ENCODE measurements at regions of chr11 and their contacts with region 1.

Region 1: GRCh38 chr11:111601979-111602864 is at the start of gene SIK2:
- DNase-seq: peak; percentile 94
- ATAC-seq: peak; percentile 94
- H3K4me3 ChIP-seq: peak within 1 kb of the TSS; percentile 94
- H3K27ac ChIP-seq: peak within 1 kb of the TSS; percentile 97
- H3K4me1 ChIP-seq: peaks cover 3% of the 10 kb centered on the region; the same call in 1 of the 2 replicates
- H3K27me3 ChIP-seq: no peaks in the 10 kb centered on the region
- CTCF ChIP-seq: peak; percentile 98
- POLR2A ChIP-seq: peak; percentile 83
- RAD21 ChIP-seq: peak; percentile 99
- total RNA-seq, gene SIK2: 7.9 and 8.6 TPM in 2 replicates

Region 2: GRCh38 chr11:111359223-111360149 is 242.7 kb before region 1 on chr11:
- CTCF ChIA-PET with region 1: no interaction called
- POLR2A ChIA-PET with region 1: no interaction called
- dilution Hi-C with region 1: no loop called
- in situ Hi-C with region 1: no loop called
- intact Hi-C with region 1: no loop called
- DNase-seq: no peak
- ATAC-seq: no peak
- H3K4me3 ChIP-seq: no peak overlapping the region
- H3K27ac ChIP-seq: no peak overlapping the region
- H3K4me1 ChIP-seq: no peaks in the 10 kb centered on the region
- H3K27me3 ChIP-seq: peaks cover 30% of the 10 kb centered on the region
- CTCF ChIP-seq: 0 out of 2 replicates have a peak, but pooled peaks have one; percentile 2
- POLR2A ChIP-seq: no peak
- RAD21 ChIP-seq: no peak

Region 3: GRCh38 chr11:111454561-111455192 is 147.5 kb before region 1 on chr11:
- CTCF ChIA-PET with region 1: no interaction called
- POLR2A ChIA-PET with region 1: no interaction called
- dilution Hi-C with region 1: no loop called
- in situ Hi-C with region 1: no loop called
- intact Hi-C with region 1: loop called (anchors 10 kb)
- DNase-seq: peak; percentile 73
- ATAC-seq: peak; percentile 90
- H3K4me3 ChIP-seq: no peak overlapping the region
- H3K27ac ChIP-seq: peak overlapping the region; percentile 26
- H3K4me1 ChIP-seq: peaks cover 5% of the 10 kb centered on the region
- H3K27me3 ChIP-seq: peaks cover 2% of the 10 kb centered on the region; the same call in 1 of the 2 replicates
- CTCF ChIP-seq: peak; percentile 56
- POLR2A ChIP-seq: no peak
- RAD21 ChIP-seq: peak; percentile 72

Region 4: DNA sequence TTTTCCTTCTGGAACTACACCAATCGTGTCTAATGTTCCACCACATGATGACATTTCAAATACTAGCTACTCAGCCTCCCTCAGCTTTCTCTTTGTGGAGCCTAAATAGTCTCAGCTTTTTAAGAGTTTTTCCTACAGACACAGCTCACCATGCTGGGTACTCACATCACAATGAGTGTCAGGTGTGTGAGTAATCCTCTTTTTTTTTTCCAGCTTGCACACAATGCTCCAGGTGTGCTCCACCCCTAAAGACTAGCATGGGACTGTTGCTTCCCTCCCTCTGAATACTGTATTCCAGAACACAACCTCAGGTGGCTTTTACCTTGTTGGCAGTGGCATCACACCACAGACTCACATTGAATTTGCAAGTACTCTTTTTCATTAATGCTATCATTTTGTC is 101.7 kb before region 1 on chr11:
- CTCF ChIA-PET with region 1: no interaction called
- POLR2A ChIA-PET with region 1: no interaction called
- dilution Hi-C with region 1: no loop called
- in situ Hi-C with region 1: no loop called
- intact Hi-C with region 1: no loop called
- DNase-seq: no peak
- ATAC-seq: no peak
- H3K4me3 ChIP-seq: no peak overlapping the region
- H3K27ac ChIP-seq: no peak overlapping the region
- H3K4me1 ChIP-seq: no peaks in the 10 kb centered on the region
- H3K27me3 ChIP-seq: peaks cover 7% of the 10 kb centered on the region; the same call in 1 of the 2 replicates
- CTCF ChIP-seq: no peak
- POLR2A ChIP-seq: no peak
- RAD21 ChIP-seq: no peak

Region 5: DNA sequence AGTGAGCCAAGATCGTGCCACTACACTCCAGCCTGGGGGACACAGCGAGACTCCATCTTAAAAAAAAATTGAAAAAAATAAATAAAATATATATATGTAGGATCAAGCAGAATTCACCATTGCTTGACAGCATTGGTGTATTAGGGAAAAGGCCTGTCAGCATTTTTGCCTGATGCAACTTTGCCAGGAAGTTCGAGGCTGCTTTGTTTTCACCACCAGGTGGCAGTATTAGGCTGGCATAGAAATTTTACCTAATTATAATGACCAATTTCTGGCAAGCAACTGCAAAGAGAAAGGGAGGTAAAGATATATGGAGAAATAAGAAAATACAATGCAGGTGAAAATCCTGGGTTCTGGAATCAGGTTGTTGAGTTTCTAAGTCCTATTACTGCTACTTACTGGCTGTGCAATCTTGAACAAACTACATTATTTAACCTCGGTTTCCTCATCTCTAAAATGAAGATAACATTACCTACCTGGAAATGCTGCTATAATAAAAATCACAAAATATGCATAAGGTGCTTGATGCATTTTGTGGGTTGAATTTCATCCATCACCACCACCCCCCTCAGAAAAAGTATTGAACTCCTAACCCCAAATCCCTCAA is 37.0 kb before region 1 on chr11:
- CTCF ChIA-PET with region 1: no interaction called
- POLR2A ChIA-PET with region 1: no interaction called
- dilution Hi-C with region 1: no loop called
- in situ Hi-C with region 1: no loop called
- intact Hi-C with region 1: loop called (anchors 2 kb)
- DNase-seq: peak; percentile 80
- ATAC-seq: peak; percentile 11; the same call in 1 of the 2 replicates
- H3K4me3 ChIP-seq: no peak overlapping the region
- H3K27ac ChIP-seq: no peak overlapping the region
- H3K4me1 ChIP-seq: peaks cover 23% of the 10 kb centered on the region
- H3K27me3 ChIP-seq: no peaks in the 10 kb centered on the region
- CTCF ChIP-seq: peak; percentile 92
- POLR2A ChIP-seq: peak; percentile 28; the same call in 1 of the 2 replicates
- RAD21 ChIP-seq: peak; percentile 89

Region 6: DNA sequence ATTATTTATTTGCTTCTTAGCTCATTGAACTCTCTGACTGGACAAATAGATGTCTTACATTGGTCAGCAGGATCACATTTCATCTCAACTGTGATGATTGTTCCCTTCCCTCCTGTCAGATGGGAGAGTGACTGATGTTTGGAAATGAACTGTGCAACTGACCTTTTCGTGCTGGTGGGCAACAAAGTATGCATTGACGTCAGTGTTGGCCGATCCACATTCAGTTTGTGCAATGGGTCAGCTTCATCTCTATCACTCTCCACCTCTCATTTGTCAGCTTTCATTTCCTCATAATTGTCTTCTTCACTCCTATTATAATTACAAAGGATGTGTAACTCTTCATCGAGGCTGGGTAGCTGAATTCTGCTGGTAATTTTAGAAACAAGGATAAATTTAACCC is 92.6 kb after region 1 on chr11:
- CTCF ChIA-PET with region 1: interaction called, 5 read pairs
- POLR2A ChIA-PET with region 1: no interaction called
- dilution Hi-C with region 1: no loop called
- in situ Hi-C with region 1: no loop called
- intact Hi-C with region 1: loop called (anchors 10 kb)
- DNase-seq: peak; percentile 99
- ATAC-seq: peak; percentile 78
- H3K4me3 ChIP-seq: no peak overlapping the region
- H3K27ac ChIP-seq: no peak overlapping the region
- H3K4me1 ChIP-seq: peaks cover 17% of the 10 kb centered on the region
- H3K27me3 ChIP-seq: no peaks in the 10 kb centered on the region
- CTCF ChIP-seq: no peak
- POLR2A ChIP-seq: no peak
- RAD21 ChIP-seq: no peak

Region 7: DNA sequence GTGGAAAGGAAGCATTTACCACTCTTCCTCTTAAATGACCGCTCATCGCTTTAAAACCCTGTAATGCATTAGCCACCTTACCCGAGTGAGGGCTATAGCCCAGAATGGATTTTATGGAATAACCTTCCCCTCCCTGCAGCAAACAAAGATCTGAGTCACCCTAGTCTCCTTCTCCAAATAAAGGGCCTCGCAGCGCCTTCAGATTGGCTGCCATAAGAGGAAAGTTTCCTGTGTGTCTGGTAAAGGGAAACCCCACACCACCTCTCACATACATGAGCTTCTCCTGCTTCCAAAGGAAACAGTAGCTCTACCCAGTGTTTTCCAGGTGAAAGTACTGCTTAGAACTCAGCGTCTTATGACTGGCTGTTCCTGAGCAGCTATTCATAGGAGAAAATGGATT is 116.2 kb after region 1 on chr11:
- CTCF ChIA-PET with region 1: interaction called, 3 read pairs
- POLR2A ChIA-PET with region 1: no interaction called
- dilution Hi-C with region 1: no loop called
- in situ Hi-C with region 1: no loop called
- intact Hi-C with region 1: loop called (anchors 1 kb)
- DNase-seq: peak; percentile 91
- ATAC-seq: peak; percentile 95
- H3K4me3 ChIP-seq: no peak overlapping the region
- H3K27ac ChIP-seq: peak overlapping the region; percentile 73
- H3K4me1 ChIP-seq: peaks cover 13% of the 10 kb centered on the region
- H3K27me3 ChIP-seq: no peaks in the 10 kb centered on the region
- CTCF ChIP-seq: no peak; the same call in 1 of the 2 replicates
- POLR2A ChIP-seq: 0 out of 2 replicates have a peak, but pooled peaks have one; percentile 49
- RAD21 ChIP-seq: peak; percentile 23

Region 8: DNA sequence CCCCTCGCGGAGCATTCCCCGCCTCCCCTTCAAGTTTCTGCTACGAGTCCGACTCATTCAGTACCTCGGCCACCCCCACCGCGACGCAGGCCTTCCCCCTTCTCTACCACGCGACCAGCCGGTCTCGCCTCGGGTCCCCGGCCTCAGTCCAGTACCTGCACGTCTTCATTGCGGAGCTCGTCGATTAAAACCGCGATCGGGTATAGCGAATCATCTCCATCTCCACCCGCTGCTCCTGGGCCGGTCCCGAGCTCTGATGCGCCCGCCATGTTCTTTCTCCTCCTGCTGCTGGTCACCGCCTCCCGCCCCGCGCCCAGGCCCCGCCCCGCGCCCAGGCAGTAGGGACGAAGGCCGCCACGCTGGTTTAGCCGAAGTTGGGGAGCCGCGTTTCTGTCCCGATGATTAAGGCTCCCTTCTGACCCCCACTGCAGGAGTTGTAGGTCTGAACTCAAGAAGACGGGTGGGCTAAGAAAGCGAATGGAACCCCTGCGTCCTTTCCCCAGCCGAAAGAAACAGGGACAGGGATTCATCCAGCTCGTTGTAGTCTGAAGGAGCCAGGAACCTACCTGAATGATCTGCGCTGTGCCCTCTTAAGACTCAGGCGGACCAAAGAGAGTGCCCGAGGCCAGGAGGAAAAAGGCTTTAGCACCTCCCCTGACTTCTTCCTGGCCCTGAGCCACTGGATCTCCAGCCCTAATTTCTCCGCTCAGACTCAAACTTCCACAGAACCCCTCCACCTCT is 164.0 kb after region 1 on chr11 and contains the start of gene PPP2R1B:
- CTCF ChIA-PET with region 1: interaction called, 15 read pairs
- POLR2A ChIA-PET with region 1: no interaction called
- dilution Hi-C with region 1: no loop called
- in situ Hi-C with region 1: no loop called
- intact Hi-C with region 1: loop called (anchors 2 kb)
- DNase-seq: peak; percentile 44
- ATAC-seq: peak; percentile 98
- H3K4me3 ChIP-seq: peak within 1 kb of the TSS; percentile 83
- H3K27ac ChIP-seq: peak within 1 kb of the TSS; percentile 90
- H3K4me1 ChIP-seq: peaks cover 8% of the 10 kb centered on the region; the same call in 1 of the 2 replicates
- H3K27me3 ChIP-seq: no peaks in the 10 kb centered on the region
- CTCF ChIP-seq: no peak
- POLR2A ChIP-seq: peak; percentile 73
- RAD21 ChIP-seq: no peak
- total RNA-seq, gene PPP2R1B: 52.8 and 62.9 TPM in 2 replicates

Region 9: DNA sequence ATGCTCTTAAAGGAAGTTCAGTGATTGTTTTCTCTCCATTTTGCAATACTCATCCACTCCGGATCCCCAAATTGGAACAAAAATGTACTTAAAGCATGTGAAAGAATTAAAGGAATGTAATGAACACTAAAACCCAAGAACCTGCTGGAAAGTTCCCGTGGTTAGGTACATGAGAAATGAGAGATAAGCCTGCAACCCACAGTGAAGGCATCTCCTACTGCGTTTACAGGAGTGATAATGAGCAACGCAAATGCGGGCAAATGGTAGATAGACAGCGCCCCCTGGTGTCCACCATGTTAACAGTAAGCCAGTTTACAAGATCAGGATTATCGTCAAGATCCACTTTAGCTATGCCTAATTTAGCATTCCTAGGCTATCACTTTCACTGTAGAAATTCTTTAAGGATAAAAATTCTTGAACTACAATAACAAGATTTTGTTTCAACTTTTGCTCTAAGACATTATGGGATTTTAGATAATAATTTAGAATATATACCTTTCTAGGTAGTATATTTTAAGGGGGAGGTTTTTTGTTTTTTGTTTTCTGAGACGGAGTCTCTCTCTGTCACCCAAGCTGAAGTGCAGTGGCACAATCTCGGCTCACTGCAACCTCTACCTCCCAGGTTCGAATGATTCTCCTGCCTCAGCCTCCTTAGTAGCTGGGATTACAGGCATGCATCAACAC is 239.3 kb after region 1 on chr11:
- CTCF ChIA-PET with region 1: no interaction called
- POLR2A ChIA-PET with region 1: no interaction called
- dilution Hi-C with region 1: no loop called
- in situ Hi-C with region 1: no loop called
- intact Hi-C with region 1: loop called (anchors 1 kb)
- DNase-seq: peak; percentile 88
- ATAC-seq: peak; percentile 92
- H3K4me3 ChIP-seq: no peak overlapping the region
- H3K27ac ChIP-seq: no peak overlapping the region
- H3K4me1 ChIP-seq: peaks cover 5% of the 10 kb centered on the region
- H3K27me3 ChIP-seq: no peaks in the 10 kb centered on the region
- CTCF ChIP-seq: peak; percentile 89
- POLR2A ChIP-seq: peak; percentile 37; the same call in 1 of the 2 replicates
- RAD21 ChIP-seq: peak; percentile 95

Region 10: DNA sequence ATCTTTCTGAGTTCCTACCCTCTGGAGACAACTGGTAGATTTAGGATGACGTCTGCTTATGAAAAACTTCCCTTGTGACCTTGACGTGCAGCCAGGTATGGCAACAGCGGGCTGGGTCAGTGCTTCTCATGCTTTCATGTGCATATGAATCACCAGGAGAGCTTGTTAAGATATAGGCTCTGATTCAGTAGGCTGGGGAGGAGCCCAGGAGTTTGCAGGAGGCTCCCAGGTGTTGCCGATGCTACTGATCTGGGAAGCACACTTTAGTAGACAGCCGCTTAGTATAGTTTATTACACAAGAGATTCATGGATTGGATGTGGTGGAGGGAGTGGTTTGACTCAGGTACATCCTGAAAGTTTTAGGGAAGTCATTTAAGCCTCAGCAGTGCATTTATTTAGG is 358.7 kb after region 1 on chr11:
- CTCF ChIA-PET with region 1: no interaction called
- POLR2A ChIA-PET with region 1: no interaction called
- dilution Hi-C with region 1: no loop called
- in situ Hi-C with region 1: no loop called
- intact Hi-C with region 1: no loop called
- DNase-seq: no peak
- ATAC-seq: no peak
- H3K4me3 ChIP-seq: no peak overlapping the region
- H3K27ac ChIP-seq: no peak overlapping the region
- H3K4me1 ChIP-seq: no peaks in the 10 kb centered on the region
- H3K27me3 ChIP-seq: no peaks in the 10 kb centered on the region
- CTCF ChIP-seq: no peak
- POLR2A ChIP-seq: no peak
- RAD21 ChIP-seq: no peak